ENCODE measurements at regions of chr4 and their contacts with region 1.

Region 1: GRCh38 chr4:157978680-157979361 is 194.0 kb downstream of the GASK1B start:
- DNase-seq: peak; percentile 18 to 56
- ATAC-seq: peak; percentile 59 to 87 (median 77)
- H3K4me3 ChIP-seq: peak overlapping the region in 4 of 10 donors; percentile 23 to 28 (median 26)
- H3K27ac ChIP-seq: no peak overlapping the region
- H3K4me1 ChIP-seq: peaks cover 0 to 19% (median 0%) of the 10 kb centered on the region in 9 donors
- H3K27me3 ChIP-seq: no peaks in the 10 kb centered on the region
- CTCF ChIP-seq: peak; percentile 72 to 93 (median 87)

Region 2: DNA sequence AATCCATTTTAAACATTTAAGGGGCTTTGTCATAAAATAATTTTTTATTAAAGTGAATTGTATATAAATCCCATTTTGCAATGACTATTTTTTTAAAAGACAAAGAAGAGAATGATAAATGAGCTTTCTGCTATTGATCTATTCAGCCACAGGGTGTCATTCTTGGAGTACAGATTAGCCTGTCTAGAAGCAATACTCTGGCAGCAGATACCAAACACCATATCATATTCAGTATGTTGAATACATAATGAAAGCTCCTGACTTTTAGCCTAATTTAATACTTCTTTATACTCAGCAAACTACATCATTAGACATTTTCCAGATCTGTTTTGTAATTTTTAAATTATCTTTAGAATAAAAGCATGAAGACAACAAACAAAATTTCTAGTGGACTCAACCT is 1503.5 kb before region 1 on chr4:
- intact Hi-C with region 1: loop called in 1 of 10 experiments (anchors 5 kb)
- DNase-seq: no peak
- ATAC-seq: peak in 6 of 8 donors; percentile 42 to 71 (median 63)
- H3K4me3 ChIP-seq: no peak overlapping the region
- H3K27ac ChIP-seq: no peak overlapping the region
- H3K4me1 ChIP-seq: no peaks in the 10 kb centered on the region
- H3K27me3 ChIP-seq: no peaks in the 10 kb centered on the region
- CTCF ChIP-seq: peak; percentile 20 to 67 (median 55)

Region 3: GRCh38 chr4:156594624-156595023 is 1384.2 kb before region 1 on chr4:
- intact Hi-C with region 1: loop called in 1 of 10 experiments (anchors 10 kb)
- DNase-seq: peak; percentile 8 to 35
- ATAC-seq: peak in 2 of 8 donors; percentile 39 to 55
- H3K4me3 ChIP-seq: no peak overlapping the region
- H3K27ac ChIP-seq: no peak overlapping the region
- H3K4me1 ChIP-seq: peaks cover 0 to 25% (median 0%) of the 10 kb centered on the region in 9 donors
- H3K27me3 ChIP-seq: peaks cover 0 to 5% (median 0%) of the 10 kb centered on the region in 7 donors
- CTCF ChIP-seq: no peak

Region 4: GRCh38 chr4:156983366-156983765 is 995.5 kb before region 1 on chr4:
- intact Hi-C with region 1: loop called in 1 of 10 experiments (anchors 10 kb)
- DNase-seq: no peak
- ATAC-seq: no peak
- H3K4me3 ChIP-seq: no peak overlapping the region
- H3K27ac ChIP-seq: no peak overlapping the region
- H3K4me1 ChIP-seq: no peaks in the 10 kb centered on the region
- H3K27me3 ChIP-seq: no peaks in the 10 kb centered on the region
- CTCF ChIP-seq: peak in 6 of 9 donors; percentile 25 to 54 (median 40)

Region 5: DNA sequence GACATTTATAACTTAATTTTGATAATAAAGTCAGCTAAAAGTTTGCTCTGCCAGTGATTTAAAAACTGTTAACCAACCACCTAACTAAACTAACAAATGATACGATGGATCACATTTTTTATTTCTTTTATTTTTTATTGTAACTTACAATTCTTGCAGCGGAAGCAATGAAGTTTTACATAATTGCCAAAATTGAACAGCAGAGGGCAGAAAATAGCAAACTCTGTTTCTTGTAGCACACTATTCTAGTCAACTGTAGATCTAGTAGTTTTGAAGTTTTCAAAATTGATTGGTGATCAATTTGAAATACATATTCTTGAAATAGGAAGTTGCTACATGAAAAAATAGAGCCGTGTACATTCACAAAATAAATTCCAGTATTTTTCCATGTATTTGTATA is 761.1 kb before region 1 on chr4:
- intact Hi-C with region 1: loop called in 6 of 10 experiments (anchors 5 to 10 kb)
- DNase-seq: no peak
- ATAC-seq: no peak
- H3K4me3 ChIP-seq: no peak overlapping the region
- H3K27ac ChIP-seq: no peak overlapping the region
- H3K4me1 ChIP-seq: peaks cover 0 to 13% (median 7%) of the 10 kb centered on the region in 9 donors
- H3K27me3 ChIP-seq: peaks cover 7 to 54% (median 43%) of the 10 kb centered on the region in 7 donors
- CTCF ChIP-seq: peak in 7 of 9 donors; percentile 25 to 60 (median 39)

Region 6: DNA sequence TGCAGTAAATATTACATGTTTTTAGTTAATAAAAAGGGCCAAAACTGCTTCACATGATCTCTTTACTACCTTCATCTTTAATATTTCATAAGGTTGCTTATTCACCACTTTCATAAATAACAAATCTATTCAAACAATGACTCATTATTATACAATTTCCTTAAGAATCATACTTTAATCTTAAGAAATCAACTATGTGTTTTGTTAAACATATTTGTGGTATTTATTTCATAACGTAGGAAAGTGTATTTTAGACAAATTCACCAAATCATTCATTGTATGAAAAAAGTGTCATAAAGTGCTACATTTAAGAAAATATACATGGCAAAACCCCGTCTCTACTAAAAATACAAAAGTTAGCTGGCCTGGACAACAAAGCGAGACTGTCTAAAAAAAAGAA is 392.3 kb after region 1 on chr4:
- intact Hi-C with region 1: no loop called
- DNase-seq: no peak
- ATAC-seq: no peak
- H3K4me3 ChIP-seq: no peak overlapping the region
- H3K27ac ChIP-seq: no peak overlapping the region
- H3K4me1 ChIP-seq: no peaks in the 10 kb centered on the region
- H3K27me3 ChIP-seq: no peaks in the 10 kb centered on the region
- CTCF ChIP-seq: no peak